Activated CD4-positive, alpha-beta T cell treated with anti-CD3 and anti-CD28 coated beads, Interleukin-2, amount 10 ng/mL, durations not matched to agents 24 days and 14 days (primary cell): ENCODE measurements at regions of chr6 and their contacts with region 1.

Region 1: GRCh38 chr6:136282906-136283305 is 6.7 kb downstream of the BCLAF1 start:
- DNase-seq: no peak
- H3K4me3 Mint-ChIP-seq: peak overlapping the region; percentile 69
- H3K27ac Mint-ChIP-seq: no peak overlapping the region
- H3K4me1 Mint-ChIP-seq: peaks cover 58% of the 10 kb centered on the region
- H3K27me3 Mint-ChIP-seq: no peaks in the 10 kb centered on the region

Region 2: DNA sequence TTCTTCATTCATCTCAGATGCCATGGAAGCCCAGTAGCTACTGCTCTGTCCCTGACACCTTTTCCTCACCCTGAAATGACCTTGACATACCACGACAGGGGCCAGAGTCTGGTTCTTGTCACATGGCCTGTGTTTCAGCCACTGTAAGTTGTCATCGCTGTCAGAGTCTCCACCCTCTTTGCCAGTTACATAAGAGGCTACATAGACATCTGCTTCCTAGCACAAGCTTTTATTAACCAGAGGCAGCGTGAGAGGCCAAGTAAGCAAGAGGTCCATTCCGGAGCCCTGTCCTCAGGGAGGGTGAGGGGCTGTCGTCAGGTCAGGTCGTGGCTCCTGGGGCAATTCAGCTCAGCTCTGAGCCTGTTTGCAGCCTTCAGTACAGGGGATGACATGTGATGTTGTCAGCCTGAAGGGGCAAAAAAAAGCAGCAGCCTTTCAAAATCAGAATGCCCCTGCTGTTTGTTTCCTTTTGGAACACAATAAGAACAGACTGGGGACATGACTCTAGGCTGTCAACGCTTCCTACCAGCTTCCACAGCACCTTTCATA is 179.1 kb before region 1 on chr6:
- intact Hi-C with region 1: no loop called
- DNase-seq: no peak
- H3K4me3 Mint-ChIP-seq: no peak overlapping the region
- H3K27ac Mint-ChIP-seq: no peak overlapping the region
- H3K4me1 Mint-ChIP-seq: peaks cover 7% of the 10 kb centered on the region
- H3K27me3 Mint-ChIP-seq: peaks cover 1% of the 10 kb centered on the region

Region 3: DNA sequence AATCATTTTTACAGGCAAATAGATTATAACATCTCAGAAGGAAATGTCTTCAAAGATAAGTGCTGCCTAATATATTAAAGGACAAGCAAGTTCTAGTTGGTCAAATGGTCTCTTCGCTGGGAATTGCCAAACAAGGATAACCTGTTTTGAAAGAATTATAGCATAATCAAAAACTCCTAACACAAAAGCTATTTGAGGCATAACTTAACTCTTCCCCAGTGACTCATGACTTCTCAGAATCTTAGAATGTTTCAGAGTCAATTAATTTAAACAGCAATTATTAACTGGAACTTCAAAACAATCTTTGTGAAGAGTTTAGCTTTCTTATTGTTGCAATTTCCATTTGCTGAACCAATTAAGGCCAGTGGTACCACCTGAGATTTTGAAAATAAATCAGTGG is 159.4 kb before region 1 on chr6:
- intact Hi-C with region 1: no loop called
- DNase-seq: no peak
- H3K4me3 Mint-ChIP-seq: no peak overlapping the region
- H3K27ac Mint-ChIP-seq: no peak overlapping the region
- H3K4me1 Mint-ChIP-seq: no peaks in the 10 kb centered on the region
- H3K27me3 Mint-ChIP-seq: peaks cover 4% of the 10 kb centered on the region

Region 4: GRCh38 chr6:136262940-136263339 is 20.0 kb before region 1 on chr6:
- intact Hi-C with region 1: loop called (anchors 2 kb)
- DNase-seq: no peak
- H3K4me3 Mint-ChIP-seq: no peak overlapping the region
- H3K27ac Mint-ChIP-seq: no peak overlapping the region
- H3K4me1 Mint-ChIP-seq: peaks cover 21% of the 10 kb centered on the region
- H3K27me3 Mint-ChIP-seq: no peaks in the 10 kb centered on the region